Calu3 (cell line): ENCODE measurements at regions of chr11 and their contacts with region 1.

Region 1: DNA sequence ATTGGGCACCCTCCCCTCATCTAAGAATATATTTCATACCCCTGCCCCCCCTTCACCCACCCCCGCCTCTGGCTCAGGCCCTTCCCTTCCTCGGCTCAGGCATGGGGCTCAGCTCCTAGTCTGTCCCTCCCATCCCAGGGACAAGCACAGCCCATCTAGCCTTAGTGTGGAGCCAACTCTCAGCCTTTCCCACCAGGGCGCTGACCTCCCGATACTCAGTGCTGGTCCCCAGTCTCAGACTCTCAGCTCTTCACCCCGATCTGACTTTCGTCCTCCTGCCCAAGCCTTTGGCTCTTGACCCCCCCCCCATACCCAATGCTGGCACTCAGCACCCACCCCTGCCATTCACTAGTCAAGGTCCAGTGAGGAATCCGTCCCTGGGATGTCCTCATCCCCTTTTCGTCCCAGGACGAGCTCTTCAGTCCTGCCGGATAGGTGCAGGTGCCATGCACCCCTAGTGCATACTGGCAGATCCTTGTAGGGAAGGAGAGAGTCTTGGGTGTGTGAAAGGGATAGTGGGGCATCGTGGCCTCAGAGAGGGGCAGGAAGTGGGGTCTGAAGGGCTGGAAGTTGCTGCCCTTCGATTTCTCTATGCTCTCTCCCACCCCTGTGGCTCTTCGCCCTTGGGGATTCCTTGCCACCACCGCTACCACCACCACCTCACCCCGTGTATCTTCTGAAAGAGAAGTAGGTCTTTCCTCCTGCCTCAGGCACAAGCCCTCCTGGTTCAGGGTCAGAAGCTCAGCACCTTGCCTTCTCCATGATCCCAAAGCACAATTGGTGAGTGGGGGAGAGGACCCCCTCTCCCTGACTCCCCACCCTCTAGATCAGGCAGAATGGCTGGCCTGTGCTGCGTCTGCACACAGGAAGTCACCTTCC is 2.4 kb downstream of the TPBGL start:
- DNase-seq: no peak
- H3K4me3 Mint-ChIP-seq: peak overlapping the region; percentile 66
- H3K27ac Mint-ChIP-seq: no peak overlapping the region
- H3K4me1 Mint-ChIP-seq: no peaks in the 10 kb centered on the region
- H3K27me3 Mint-ChIP-seq: peaks cover 90% of the 10 kb centered on the region
- CTCF ChIP-seq: no peak

Region 2: GRCh38 chr11:75132080-75132479 is 110.9 kb before region 1 on chr11:
- CTCF ChIA-PET with region 1: no interaction called
- intact Hi-C with region 1: no loop called
- DNase-seq: no peak
- H3K4me3 Mint-ChIP-seq: no peak overlapping the region
- H3K27ac Mint-ChIP-seq: no peak overlapping the region
- H3K4me1 Mint-ChIP-seq: no peaks in the 10 kb centered on the region
- H3K27me3 Mint-ChIP-seq: peaks cover 62% of the 10 kb centered on the region
- CTCF ChIP-seq: no peak

Region 3: GRCh38 chr11:75154646-75155581 is 88.0 kb before region 1 on chr11:
- CTCF ChIA-PET with region 1: interaction called, 11 read pairs
- intact Hi-C with region 1: no loop called
- DNase-seq: no peak
- H3K4me3 Mint-ChIP-seq: no peak overlapping the region
- H3K27ac Mint-ChIP-seq: no peak overlapping the region
- H3K4me1 Mint-ChIP-seq: peaks cover 28% of the 10 kb centered on the region
- H3K27me3 Mint-ChIP-seq: peaks cover 33% of the 10 kb centered on the region
- CTCF ChIP-seq: no peak

Region 4: GRCh38 chr11:75280227-75280701 is 37.3 kb after region 1 on chr11:
- CTCF ChIA-PET with region 1: no interaction called
- intact Hi-C with region 1: no loop called
- DNase-seq: peak; percentile 82
- H3K4me3 Mint-ChIP-seq: no peak overlapping the region
- H3K27ac Mint-ChIP-seq: no peak overlapping the region
- H3K4me1 Mint-ChIP-seq: peaks cover 9% of the 10 kb centered on the region
- H3K27me3 Mint-ChIP-seq: no peaks in the 10 kb centered on the region
- CTCF ChIP-seq: peak; percentile 93

Region 5: DNA sequence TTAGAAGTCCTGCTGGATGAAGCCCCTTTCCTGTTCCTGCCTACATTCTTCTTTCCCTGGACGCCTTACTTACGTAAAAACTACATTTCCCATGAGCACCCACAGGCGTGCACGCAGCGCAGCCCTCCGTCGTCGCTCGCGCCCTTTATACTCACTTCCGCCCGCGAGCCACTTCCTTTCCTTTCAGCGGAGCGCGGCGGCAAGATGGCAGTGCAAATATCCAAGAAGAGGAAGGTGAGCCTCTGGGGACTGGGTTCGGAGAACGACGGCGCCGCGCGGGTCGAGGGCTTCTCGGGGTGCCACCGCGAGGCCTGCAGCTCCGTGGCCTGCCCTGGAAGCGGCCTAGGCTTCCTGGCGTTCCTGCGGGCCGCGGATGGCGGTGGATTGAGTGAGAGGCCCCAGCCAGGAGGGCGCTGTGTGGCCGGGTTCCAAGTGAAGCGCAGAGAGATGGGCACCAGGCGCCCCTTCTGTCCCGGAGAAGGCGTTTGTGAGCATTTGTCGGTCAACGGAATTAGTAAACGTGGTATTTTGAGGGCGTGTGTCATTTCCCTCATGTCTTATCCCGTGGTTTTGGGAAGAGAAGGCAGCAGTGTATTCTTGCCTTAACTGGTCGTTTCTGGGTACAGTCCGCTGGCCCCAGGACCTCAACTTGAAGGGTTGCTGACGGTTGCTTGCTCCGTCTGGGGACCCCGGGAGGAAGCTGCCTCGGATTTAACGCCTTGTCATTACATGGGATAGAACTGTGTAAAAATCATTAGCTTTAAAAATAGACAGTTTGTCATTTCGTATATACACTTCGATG is 156.6 kb after region 1 on chr11 and contains the start of gene RPS3:
- CTCF ChIA-PET with region 1: no interaction called
- intact Hi-C with region 1: no loop called
- DNase-seq: peak; percentile 89
- H3K4me3 Mint-ChIP-seq: peak within 1 kb of the TSS; percentile 98
- H3K27ac Mint-ChIP-seq: peak within 1 kb of the TSS; percentile 97
- H3K4me1 Mint-ChIP-seq: peaks cover 25% of the 10 kb centered on the region
- H3K27me3 Mint-ChIP-seq: peaks cover 16% of the 10 kb centered on the region
- CTCF ChIP-seq: no peak
- total RNA-seq, gene RPS3: 1,650 and 1,749 TPM in 2 replicates